Gastrocnemius medialis (tissue), 4 donors: ENCODE measurements at regions of chr14 and their contacts with region 1.

Region 1: DNA sequence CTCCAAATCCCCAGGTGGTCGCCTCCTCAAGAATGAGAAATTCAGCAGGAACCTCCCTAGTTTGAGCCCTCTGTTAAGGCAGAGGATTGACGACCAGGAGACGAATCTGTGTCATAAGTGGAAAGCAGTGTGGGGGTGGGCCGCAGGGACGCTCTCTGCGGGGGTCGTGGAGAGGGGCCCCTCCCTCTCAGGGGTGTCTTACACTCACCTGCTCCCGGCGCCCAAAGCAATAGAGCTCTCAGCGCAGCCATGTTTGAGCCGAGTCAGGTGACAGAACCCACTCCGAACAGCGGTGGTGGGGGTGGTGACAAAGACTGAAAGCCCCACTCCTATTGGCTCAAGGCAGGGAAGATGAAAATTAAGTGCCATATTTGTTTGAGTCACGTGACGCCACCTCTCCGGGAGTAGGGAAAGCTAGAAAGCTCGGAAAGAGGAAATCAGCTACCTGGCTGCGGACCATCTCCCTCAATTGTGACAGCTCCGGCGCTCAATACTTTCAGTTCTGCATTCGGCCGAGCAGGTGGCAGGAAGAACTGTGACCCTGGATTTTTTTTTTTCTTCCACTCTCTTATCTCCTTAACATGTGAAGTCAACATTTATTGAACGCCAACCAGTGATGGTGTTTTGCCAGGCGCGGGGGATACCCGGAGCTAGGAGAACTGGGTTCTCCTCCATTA is at the start of gene ZFYVE26:
- DNase-seq: peak; percentile 94
- ATAC-seq: peak; percentile 96 to 99
- H3K4me3 ChIP-seq: peak within 1 kb of the TSS; percentile 72 to 97 (median 86)
- H3K27ac ChIP-seq: peak within 1 kb of the TSS; percentile 84 to 90 (median 86)
- H3K4me1 ChIP-seq: peaks cover 21 to 35% of the 10 kb centered on the region in 2 donors
- H3K27me3 ChIP-seq: no peaks in the 10 kb centered on the region
- CTCF ChIP-seq: peak in 1 of 5 experiments; percentile 40
- POLR2A ChIP-seq: peak; percentile 15 to 45
- total RNA-seq, gene ZFYVE26: 16.3 to 26.3 (median 17.6) TPM

Region 2: GRCh38 chr14:67695394-67695949 is 121.0 kb before region 1 on chr14 and contains the start of gene RDH11:
- in situ Hi-C with region 1: no loop called
- intact Hi-C with region 1: loop called (anchors 5 kb)
- DNase-seq: peak; percentile 73 to 77
- ATAC-seq: peak; percentile 100
- H3K4me3 ChIP-seq: peak within 1 kb of the TSS; percentile 74 to 87 (median 82)
- H3K27ac ChIP-seq: peak within 1 kb of the TSS; percentile 61 to 69 (median 66)
- H3K4me1 ChIP-seq: peaks cover 6% of the 10 kb centered on the region in 2 donors
- H3K27me3 ChIP-seq: no peaks in the 10 kb centered on the region
- CTCF ChIP-seq: no peak
- POLR2A ChIP-seq: peak; percentile 45 to 63
- total RNA-seq, gene RDH11: 6.6 to 8.3 (median 7.5) TPM

Region 3: DNA sequence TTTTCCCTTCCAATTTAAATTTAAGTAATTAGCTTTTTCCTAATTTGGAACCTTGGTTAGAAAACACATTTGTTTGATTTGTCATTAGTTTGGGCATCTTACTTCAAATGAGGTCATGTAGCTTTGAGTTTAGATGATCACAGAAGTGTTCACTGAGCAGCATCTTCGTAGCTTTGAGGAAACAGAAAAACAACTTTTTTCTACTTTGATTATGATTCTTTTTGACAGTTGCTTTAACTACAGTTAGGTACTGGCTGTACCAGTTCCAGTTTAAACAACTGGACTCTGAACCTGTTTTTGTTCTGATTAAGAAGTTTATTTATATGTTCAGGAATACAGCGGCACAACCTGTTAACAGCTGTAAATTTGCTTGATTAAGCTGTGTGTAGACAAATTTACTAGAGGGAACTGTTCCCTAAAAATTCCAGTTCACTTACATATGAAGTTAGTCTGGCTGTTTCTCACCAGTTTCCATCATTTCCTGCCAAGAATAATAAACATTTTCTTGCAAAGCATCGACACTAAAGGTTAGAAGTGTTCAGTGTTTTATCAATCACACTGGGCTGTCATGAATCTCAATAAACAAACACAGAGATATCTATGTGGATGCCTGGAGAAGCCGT is 195.1 kb after region 1 on chr14:
- in situ Hi-C with region 1: no loop called
- intact Hi-C with region 1: no loop called
- DNase-seq: no peak
- ATAC-seq: no peak
- H3K4me3 ChIP-seq: no peak overlapping the region
- H3K27ac ChIP-seq: peak overlapping the region in 1 of 4 donors; percentile 4
- H3K4me1 ChIP-seq: peaks cover 0 to 7% of the 10 kb centered on the region in 2 donors
- H3K27me3 ChIP-seq: no peaks in the 10 kb centered on the region
- CTCF ChIP-seq: no peak
- POLR2A ChIP-seq: no peak

Region 4: GRCh38 chr14:68633071-68633991 is 816.9 kb after region 1 on chr14:
- in situ Hi-C with region 1: no loop called
- intact Hi-C with region 1: loop called (anchors 10 kb)
- DNase-seq: no peak
- ATAC-seq: peak; percentile 45 to 47
- H3K4me3 ChIP-seq: no peak overlapping the region
- H3K27ac ChIP-seq: peak overlapping the region; percentile 49 to 62 (median 52)
- H3K4me1 ChIP-seq: peaks cover 16 to 24% of the 10 kb centered on the region in 2 donors
- H3K27me3 ChIP-seq: no peaks in the 10 kb centered on the region
- CTCF ChIP-seq: no peak
- POLR2A ChIP-seq: no peak